Heart left ventricle (tissue), 16 donors: ENCODE measurements at regions of chr6 and their contacts with region 1.

Region 1: GRCh38 chr6:53159558-53159957 is 10.9 kb upstream of the GCM1 start:
- DNase-seq: no peak
- ATAC-seq: no peak
- H3K4me3 ChIP-seq: no peak overlapping the region
- H3K27ac ChIP-seq: no peak overlapping the region
- H3K4me1 ChIP-seq: peaks cover 0 to 5% (median 0%) of the 10 kb centered on the region in 12 donors
- H3K27me3 ChIP-seq: no peaks in the 10 kb centered on the region
- CTCF ChIP-seq: no peak
- POLR2A ChIP-seq: no peak

Region 2: DNA sequence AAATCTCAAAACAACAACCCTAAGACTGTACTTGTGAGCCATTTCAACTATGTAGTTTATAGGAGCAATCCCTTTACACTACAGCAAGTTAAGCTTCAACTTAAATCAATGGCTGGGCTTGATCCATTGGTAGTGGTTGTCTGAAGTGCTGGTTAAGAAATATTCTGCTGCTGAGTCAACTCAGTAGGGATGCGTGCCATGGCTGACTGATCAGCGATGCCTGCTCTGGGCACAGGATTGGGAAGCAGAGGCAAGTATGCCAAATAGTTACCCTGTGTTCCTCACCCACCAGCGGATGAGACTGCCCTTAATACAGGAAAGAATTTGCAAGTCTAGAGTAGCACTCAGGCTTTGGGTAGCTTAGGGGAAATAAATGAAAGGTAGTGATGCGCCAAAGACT is 52.5 kb before region 1 on chr6:
- intact Hi-C with region 1: loop called in 1 of 10 experiments (anchors 2 kb)
- DNase-seq: no peak
- ATAC-seq: no peak
- H3K4me3 ChIP-seq: no peak overlapping the region
- H3K27ac ChIP-seq: peak overlapping the region in 1 of 12 donors; percentile 33
- H3K4me1 ChIP-seq: peaks cover 0 to 5% (median 0%) of the 10 kb centered on the region in 12 donors
- H3K27me3 ChIP-seq: no peaks in the 10 kb centered on the region
- CTCF ChIP-seq: no peak
- POLR2A ChIP-seq: no peak

Region 3: GRCh38 chr6:53119772-53120409 is 39.7 kb before region 1 on chr6:
- intact Hi-C with region 1: no loop called
- DNase-seq: no peak
- ATAC-seq: no peak
- H3K4me3 ChIP-seq: no peak overlapping the region
- H3K27ac ChIP-seq: peak overlapping the region in 1 of 12 donors; percentile 34
- H3K4me1 ChIP-seq: no peaks in the 10 kb centered on the region
- H3K27me3 ChIP-seq: peaks cover 0 to under 1% (median 0%) of the 10 kb centered on the region in 9 donors
- CTCF ChIP-seq: no peak
- POLR2A ChIP-seq: no peak